Naive thymus-derived CD8-positive, alpha-beta T cell (primary cell): ENCODE measurements at regions of chr3 and their contacts with region 1.

Region 1: GRCh38 chr3:150408221-150409102 is at the start of gene TSC22D2:
- DNase-seq: peak; percentile 93 to 99 (median 97)
- ATAC-seq: peak; percentile 72 to 77
- H3K4me3 Mint-ChIP-seq: peak within 1 kb of the TSS; percentile 81 to 98 (median 92)
- H3K27ac Mint-ChIP-seq: peak within 1 kb of the TSS; percentile 91 to 99 (median 98)
- H3K4me1 Mint-ChIP-seq: peaks cover 14 to 37% (median 33%) of the 10 kb centered on the region in 4 donors
- H3K27me3 Mint-ChIP-seq: no peaks in the 10 kb centered on the region
- polyA plus RNA-seq, gene TSC22D2: 6.3 to 11.8 (median 8.0) TPM

Region 2: GRCh38 chr3:150348500-150348899 is 60.0 kb before region 1 on chr3:
- POLR2A ChIA-PET with region 1: no interaction called
- DNase-seq: no peak
- ATAC-seq: no peak
- H3K4me3 Mint-ChIP-seq: no peak overlapping the region
- H3K27ac Mint-ChIP-seq: no peak overlapping the region
- H3K4me1 Mint-ChIP-seq: no peaks in the 10 kb centered on the region
- H3K27me3 Mint-ChIP-seq: peaks cover 0 to 9% (median 7%) of the 10 kb centered on the region in 5 donors

Region 3: DNA sequence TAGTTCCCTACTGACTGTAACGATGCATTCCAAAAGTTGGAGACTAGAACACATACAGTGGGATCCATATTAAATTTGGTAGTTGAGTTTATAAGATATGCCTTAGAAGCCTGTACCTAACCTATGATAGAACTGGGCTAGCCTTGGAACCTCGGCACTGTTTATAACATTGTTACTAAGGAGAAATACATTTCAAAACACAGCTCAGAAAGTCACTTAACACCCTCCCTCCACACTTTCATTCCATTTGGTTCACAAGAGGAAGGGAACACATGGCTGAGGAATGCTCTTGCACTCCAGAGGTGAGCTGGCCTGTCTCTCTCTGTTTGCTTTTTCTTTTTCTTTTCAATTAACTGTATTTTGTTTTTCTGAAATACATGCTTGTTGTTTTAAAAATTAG is 49.1 kb before region 1 on chr3:
- POLR2A ChIA-PET with region 1: no interaction called
- DNase-seq: no peak
- ATAC-seq: no peak
- H3K4me3 Mint-ChIP-seq: no peak overlapping the region
- H3K27ac Mint-ChIP-seq: no peak overlapping the region
- H3K4me1 Mint-ChIP-seq: no peaks in the 10 kb centered on the region
- H3K27me3 Mint-ChIP-seq: no peaks in the 10 kb centered on the region

Region 4: GRCh38 chr3:150384296-150385212 is 23.9 kb before region 1 on chr3:
- POLR2A ChIA-PET with region 1: interaction called, 10 read pairs
- DNase-seq: peak in 9 of 10 donors; percentile 11 to 75 (median 46)
- ATAC-seq: peak; percentile 98 to 99
- H3K4me3 Mint-ChIP-seq: peak overlapping the region; percentile 62 to 84 (median 76)
- H3K27ac Mint-ChIP-seq: peak overlapping the region; percentile 25 to 90 (median 78)
- H3K4me1 Mint-ChIP-seq: peaks cover 10 to 24% (median 18%) of the 10 kb centered on the region in 4 donors
- H3K27me3 Mint-ChIP-seq: no peaks in the 10 kb centered on the region

Region 5: DNA sequence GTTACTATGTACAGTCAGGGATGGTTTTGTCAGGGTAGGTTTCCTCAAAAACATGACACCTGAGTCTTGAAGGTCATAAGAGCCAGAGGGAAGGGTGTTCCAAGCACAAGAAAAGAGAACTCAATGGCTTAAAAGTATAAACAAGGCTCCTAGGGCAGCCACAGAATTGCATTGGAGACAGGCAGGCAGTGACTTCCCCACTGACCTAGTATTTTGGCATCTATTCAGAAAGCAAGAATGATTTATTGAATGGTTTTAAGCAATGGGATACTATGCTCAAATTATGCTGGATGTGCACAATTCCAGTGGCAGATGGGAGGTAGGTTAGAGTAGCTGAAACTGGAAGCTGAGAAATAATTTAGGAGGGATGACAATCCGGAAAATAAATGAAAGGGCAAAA is 53.6 kb after region 1 on chr3:
- POLR2A ChIA-PET with region 1: no interaction called
- DNase-seq: no peak
- ATAC-seq: no peak
- H3K4me3 Mint-ChIP-seq: no peak overlapping the region
- H3K27ac Mint-ChIP-seq: peak overlapping the region in 2 of 10 donors; percentile 25 to 35
- H3K4me1 Mint-ChIP-seq: peaks cover 0 to 2% (median 0%) of the 10 kb centered on the region in 4 donors
- H3K27me3 Mint-ChIP-seq: no peaks in the 10 kb centered on the region

Region 6: GRCh38 chr3:150495563-150496168 is 87.2 kb after region 1 on chr3:
- POLR2A ChIA-PET with region 1: interaction called, 17 read pairs
- DNase-seq: peak in 4 of 10 donors; percentile 15 to 53 (median 50)
- ATAC-seq: peak in 1 of 2 donors; percentile 64
- H3K4me3 Mint-ChIP-seq: no peak overlapping the region
- H3K27ac Mint-ChIP-seq: no peak overlapping the region
- H3K4me1 Mint-ChIP-seq: peaks cover 0 to 2% (median 0%) of the 10 kb centered on the region in 4 donors
- H3K27me3 Mint-ChIP-seq: no peaks in the 10 kb centered on the region

Region 7: DNA sequence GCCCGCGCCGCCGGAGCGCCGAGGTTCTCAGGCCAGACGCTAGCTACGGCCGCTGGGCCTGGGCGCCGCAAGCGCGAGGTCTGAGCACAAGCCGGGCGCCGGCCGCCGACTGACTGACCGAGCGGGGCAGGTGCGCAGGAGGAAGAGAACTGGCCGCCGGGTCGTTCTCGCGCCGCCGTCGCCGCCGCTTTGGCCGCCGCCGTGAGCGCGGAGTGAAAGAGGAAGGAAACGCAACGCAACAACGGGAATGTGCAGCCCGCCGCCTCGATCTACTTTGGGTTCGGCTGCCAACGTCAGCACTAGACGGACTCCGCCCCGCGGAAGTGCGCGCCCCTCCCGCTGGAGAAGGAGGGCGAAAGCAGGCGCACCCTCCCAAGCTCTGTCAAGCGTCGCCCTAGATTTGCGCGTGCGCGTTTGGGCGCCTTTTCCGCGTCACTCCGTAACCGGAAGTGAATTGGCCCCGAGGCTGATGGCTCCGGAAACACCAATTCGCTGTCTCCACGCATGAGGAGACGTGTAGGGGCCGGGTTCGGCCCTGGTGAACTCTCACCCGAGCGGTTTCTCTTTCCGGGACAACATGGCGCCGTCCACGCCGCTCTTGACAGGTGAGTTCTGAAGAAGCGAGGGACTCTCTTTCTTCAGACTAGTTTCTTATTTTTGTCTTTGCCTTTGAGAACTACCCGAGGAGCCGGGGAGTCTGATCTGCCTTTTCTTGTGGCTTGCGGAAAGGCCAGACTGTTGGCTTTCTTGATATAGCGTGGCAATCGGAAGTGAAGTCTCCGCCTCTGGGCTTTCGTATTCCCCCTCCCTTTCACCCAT is 138.0 kb after region 1 on chr3 and contains the starts of genes EIF2A and SERP1:
- POLR2A ChIA-PET with region 1: interaction called, 58 read pairs
- DNase-seq: peak; percentile 96 to 100 (median 99)
- ATAC-seq: peak; percentile 89 to 90
- H3K4me3 Mint-ChIP-seq: peak within 1 kb of the TSS; percentile 92 to 99 (median 96)
- H3K27ac Mint-ChIP-seq: peak within 1 kb of the TSS; percentile 97 to 100 (median 98)
- H3K4me1 Mint-ChIP-seq: peaks cover 25 to 84% (median 75%) of the 10 kb centered on the region in 4 donors
- H3K27me3 Mint-ChIP-seq: no peaks in the 10 kb centered on the region
- polyA plus RNA-seq, gene EIF2A: 47.7 to 67.2 (median 50.8) TPM
- polyA plus RNA-seq, gene SERP1: 121 to 165 (median 144) TPM

Region 8: GRCh38 chr3:150603153-150603979 is 194.9 kb after region 1 on chr3 and contains the start of gene SELENOT:
- POLR2A ChIA-PET with region 1: interaction called, 21 read pairs
- DNase-seq: peak; percentile 90 to 97 (median 95)
- ATAC-seq: peak; percentile 86
- H3K4me3 Mint-ChIP-seq: peak within 1 kb of the TSS; percentile 97 to 99 (median 98)
- H3K27ac Mint-ChIP-seq: peak within 1 kb of the TSS; percentile 98 to 100 (median 99)
- H3K4me1 Mint-ChIP-seq: peaks cover 33 to 90% (median 65%) of the 10 kb centered on the region in 4 donors
- H3K27me3 Mint-ChIP-seq: peaks cover 0 to 4% (median 0%) of the 10 kb centered on the region in 5 donors
- polyA plus RNA-seq, gene SELENOT: 142 to 267 (median 173) TPM